Sciatic nerve (tissue), 2 donors: ENCODE measurements at regions of chr14 and their contacts with region 1.

Region 1: DNA sequence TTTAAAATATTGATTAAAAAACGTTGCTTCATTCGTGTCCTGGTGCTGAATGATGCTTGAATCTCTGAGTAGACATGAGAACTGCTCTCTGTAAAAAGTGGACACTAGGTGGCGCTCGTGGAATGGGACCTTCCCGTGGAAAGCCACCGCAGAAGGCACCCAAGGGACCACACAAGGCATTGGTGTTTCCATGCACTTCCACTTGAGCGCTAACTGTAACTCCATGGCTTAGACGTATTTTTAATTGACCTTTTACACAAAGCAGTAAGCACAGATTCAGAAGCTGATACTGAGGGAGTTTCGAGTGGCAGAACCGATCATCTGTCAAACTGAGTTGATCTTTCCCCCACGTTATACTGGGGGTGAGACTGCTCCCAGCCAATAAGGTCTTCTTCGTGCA is 135.3 kb downstream of the PRKCH start:
- DNase-seq: peak; percentile 93
- ATAC-seq: peak; percentile 85

Region 2: GRCh38 chr14:61837336-61838229 is 380.9 kb after region 1 on chr14:
- intact Hi-C with region 1: loop called (anchors 5 kb)
- DNase-seq: peak; percentile 88
- ATAC-seq: peak; percentile 94

Region 3: DNA sequence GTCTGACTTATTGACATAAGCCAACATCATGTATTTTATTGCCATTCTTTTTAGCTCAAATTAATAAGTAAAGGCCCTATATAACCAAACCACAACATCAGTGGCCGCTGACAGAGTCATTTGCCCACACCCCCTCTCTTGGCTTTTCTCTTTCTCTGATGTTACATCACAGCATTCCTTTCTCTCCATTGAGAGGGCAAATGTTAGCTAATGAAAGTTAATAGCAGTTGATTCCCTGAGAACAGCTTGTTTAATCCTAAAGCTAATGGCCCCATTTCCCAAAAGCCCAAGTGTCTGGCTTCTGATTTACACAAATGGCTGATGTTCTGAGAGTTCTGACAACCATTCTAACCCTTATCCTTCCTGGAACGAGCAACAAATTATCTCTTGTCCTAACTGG is 614.3 kb after region 1 on chr14:
- intact Hi-C with region 1: no loop called
- DNase-seq: no peak
- ATAC-seq: no peak